ENCODE measurements at regions of chr15 and their contacts with region 1.

Region 1: DNA sequence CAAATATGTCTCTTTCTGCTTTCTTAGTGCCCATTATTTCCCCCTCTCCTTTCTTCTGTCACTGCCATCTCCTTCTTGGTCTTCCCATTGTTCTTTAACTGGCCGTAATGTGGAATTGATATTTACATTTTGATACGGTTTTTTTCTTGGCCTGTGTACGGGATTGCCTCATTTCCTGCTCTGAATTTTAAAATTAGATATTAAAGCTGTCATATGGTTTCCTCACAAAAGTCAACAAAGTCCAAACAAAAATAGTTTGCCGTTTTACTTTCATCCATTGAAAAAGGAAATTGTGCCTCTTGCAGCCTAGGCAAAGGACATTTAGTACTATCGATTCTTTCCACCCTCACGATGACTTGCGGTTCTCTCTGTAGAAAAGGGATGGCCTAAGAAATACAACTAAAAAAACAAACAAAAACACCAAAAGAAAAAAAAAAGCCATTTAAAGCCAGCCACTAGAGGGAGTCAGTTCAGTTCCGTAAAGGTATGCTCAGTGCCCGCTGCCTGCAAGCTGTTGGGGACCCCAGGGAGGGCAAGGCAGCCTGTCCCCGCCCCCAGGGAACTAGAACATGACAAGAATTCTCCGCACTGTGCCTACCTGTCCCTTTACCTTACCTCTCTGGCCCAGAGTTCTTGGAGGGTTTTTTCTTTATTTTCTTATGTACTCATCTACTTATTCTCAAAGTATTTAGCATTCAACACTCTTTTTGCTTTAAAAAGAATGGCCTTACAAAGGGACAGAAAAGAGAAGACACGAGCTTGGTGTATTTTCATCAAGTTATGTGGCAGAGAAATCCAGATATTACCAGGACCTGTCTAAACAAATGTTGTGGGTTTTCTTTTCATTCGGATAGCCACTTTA is 30.0 kb upstream of the NR2E3 start:
- DNase-seq: peak; percentile 49
- ATAC-seq: peak; percentile 86
- H3K4me3 ChIP-seq: 0 out of 2 replicates have a peak overlapping the region, but pooled peaks have one; percentile 19
- H3K27ac ChIP-seq: peak overlapping the region; percentile 40; the same call in 1 of the 2 replicates
- H3K4me1 ChIP-seq: peaks cover 18% of the 10 kb centered on the region
- H3K27me3 ChIP-seq: no peaks in the 10 kb centered on the region
- CTCF ChIP-seq: peak; percentile 68 to 84 (median 74)
- EP300 ChIP-seq: no peak
- POLR2A ChIP-seq: no peak
- RAD21 ChIP-seq: peak; percentile 47

Region 2: DNA sequence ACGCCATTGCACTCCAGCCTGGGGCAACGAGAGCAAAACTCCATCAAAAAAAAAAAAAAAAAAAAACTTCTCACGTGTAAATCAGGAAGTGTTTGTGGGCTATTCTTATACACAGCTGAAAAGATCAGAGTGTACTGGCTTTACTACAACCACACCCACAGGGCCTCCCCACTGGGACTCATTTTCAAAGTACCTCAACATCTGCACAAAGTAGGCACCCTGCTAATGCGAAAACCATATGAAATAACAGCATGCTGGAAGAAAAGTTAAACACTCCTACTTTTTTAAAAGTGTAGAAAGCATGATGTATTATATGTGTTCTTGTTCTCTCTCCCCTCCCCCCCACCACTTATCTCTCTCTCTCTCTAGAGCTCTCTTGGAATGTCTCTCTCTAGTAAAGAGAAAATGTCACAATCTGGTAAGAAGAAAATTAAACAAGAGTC is 1028.1 kb before region 1 on chr15:
- CTCF ChIA-PET with region 1: no interaction called
- POLR2A ChIA-PET with region 1: no interaction called
- RAD21 ChIA-PET with region 1: no interaction called
- SMC1A ChIA-PET with region 1: no interaction called
- in situ Hi-C with region 1: no loop called
- intact Hi-C with region 1: no loop called
- DNase-seq: no peak
- ATAC-seq: no peak
- H3K4me3 ChIP-seq: no peak overlapping the region
- H3K27ac ChIP-seq: no peak overlapping the region
- H3K4me1 ChIP-seq: no peaks in the 10 kb centered on the region
- H3K27me3 ChIP-seq: no peaks in the 10 kb centered on the region
- CTCF ChIP-seq: no peak
- EP300 ChIP-seq: no peak
- POLR2A ChIP-seq: no peak
- RAD21 ChIP-seq: no peak

Region 3: GRCh38 chr15:71752604-71753289 is 27.6 kb before region 1 on chr15:
- CTCF ChIA-PET with region 1: interaction called, 11 read pairs
- POLR2A ChIA-PET with region 1: no interaction called
- RAD21 ChIA-PET with region 1: interaction called, 5 read pairs
- SMC1A ChIA-PET with region 1: interaction called, 4 read pairs
- in situ Hi-C with region 1: no loop called
- intact Hi-C with region 1: no loop called
- DNase-seq: no peak
- ATAC-seq: peak; percentile 45; the same call in 2 of the 3 replicates
- H3K4me3 ChIP-seq: no peak overlapping the region
- H3K27ac ChIP-seq: no peak overlapping the region
- H3K4me1 ChIP-seq: no peaks in the 10 kb centered on the region
- H3K27me3 ChIP-seq: no peaks in the 10 kb centered on the region; a peak in 2 of 4 replicates
- CTCF ChIP-seq: peak; percentile 38 to 55 (median 45); a peak in 5 of 6 replicates
- EP300 ChIP-seq: no peak
- POLR2A ChIP-seq: no peak
- RAD21 ChIP-seq: peak; percentile 70